ENCODE measurements at regions of chr3 and their contacts with region 1.

Region 1: GRCh38 chr3:72938471-72939265 is 50.8 kb downstream of the GXYLT2 start:
- DNase-seq: no peak
- ATAC-seq: peak; percentile 95

Region 2: GRCh38 chr3:72887705-72888545 is 50.7 kb before region 1 on chr3 and contains the start of gene GXYLT2:
- intact Hi-C with region 1: loop called (anchors 5 kb)
- DNase-seq: peak; percentile 84
- ATAC-seq: peak; percentile 73
- total RNA-seq, gene GXYLT2: 9.8 TPM

Region 3: DNA sequence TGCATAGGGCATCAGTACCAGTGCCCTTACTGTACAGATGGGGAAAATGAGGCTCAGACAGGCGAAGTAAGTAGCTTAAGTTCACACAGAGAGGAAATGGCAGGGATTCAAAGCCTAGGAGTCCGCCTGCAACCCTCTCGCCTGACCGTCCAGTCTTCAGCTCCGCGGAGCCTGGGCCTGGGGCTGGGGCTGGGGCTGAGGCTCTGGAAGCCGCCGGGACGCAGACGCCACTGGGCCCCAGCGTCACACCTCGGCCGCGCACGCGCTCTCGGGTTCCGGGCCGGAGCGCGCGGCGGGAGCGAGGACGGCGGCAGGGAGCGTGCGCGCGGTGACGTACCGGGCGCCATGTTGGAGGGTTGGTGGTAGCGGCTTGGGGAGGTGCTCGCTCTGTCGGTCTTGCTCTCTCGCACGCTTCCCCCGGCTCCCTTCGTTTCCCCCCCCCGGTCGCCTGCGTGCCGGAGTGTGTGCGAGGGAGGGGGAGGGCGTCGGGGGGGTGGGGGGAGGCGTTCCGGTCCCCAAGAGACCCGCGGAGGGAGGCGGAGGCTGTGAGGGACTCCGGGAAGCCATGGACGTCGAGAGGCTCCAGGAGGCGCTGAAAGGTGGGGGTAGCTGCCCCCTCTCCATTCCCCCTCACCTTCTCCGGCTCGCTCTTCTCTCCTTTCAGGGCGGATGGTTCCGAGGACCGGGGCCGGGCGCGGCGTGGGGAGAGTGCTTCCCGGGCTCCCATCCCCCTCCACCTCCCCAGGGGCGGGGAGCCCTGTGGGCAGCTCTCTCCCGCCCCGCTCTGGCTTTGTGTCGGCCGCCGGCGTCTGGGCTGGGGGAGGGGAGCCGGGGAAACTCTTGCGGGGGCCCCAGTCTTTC is 58.0 kb after region 1 on chr3 and contains the start of gene PPP4R2:
- intact Hi-C with region 1: loop called (anchors 2 kb)
- DNase-seq: peak; percentile 95
- ATAC-seq: peak; percentile 97
- total RNA-seq, gene PPP4R2: 52.8 TPM

Region 4: DNA sequence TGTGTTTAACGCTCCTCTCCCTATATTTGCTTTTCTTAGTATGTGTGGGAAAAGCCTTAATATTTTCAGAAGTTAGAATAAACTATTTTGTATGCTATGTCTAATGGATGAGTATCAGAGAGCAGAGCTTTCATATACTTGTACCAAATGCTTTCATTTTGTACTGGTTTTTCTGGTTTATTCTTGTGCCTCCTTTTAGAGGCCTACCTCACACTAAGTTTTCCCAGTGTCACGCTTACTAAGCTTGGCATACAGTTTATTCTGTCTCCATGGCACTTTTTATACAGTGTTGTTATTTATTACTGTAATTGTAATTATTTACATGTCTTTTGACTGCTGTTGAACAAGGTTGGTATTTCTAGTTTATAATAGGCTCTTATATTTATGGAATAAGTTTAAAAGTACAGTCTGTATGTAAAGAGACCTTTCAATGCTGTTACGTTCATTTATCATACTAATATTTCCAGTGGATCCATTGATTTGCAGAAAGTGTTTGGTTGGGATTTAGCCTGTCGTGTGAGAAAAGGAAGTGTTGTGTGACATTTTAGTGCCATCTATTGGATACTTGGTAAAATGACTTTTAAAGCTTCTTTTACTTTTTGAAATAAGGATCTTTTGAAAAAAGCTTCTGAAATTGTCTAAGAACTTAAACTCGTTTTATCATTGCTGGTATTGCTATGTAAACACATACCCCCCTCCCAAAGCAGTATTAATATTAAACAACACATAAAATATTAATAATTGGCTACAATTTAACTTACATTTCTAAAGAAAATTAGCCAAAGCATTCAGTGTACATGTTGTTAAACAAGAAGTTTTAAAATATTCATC is 117.6 kb after region 1 on chr3:
- intact Hi-C with region 1: loop called (anchors 1 kb)
- DNase-seq: no peak
- ATAC-seq: peak; percentile 61

Region 5: GRCh38 chr3:73086071-73086494 is 147.4 kb after region 1 on chr3:
- intact Hi-C with region 1: loop called (anchors 2 kb)
- DNase-seq: no peak
- ATAC-seq: peak; percentile 68

Measured in Right ventricle myocardium inferior (tissue), 1 donor.